ENCODE measurements at regions of chr11 and their contacts with region 1.

Region 1: GRCh38 chr11:86041975-86042378 is 26.9 kb downstream of the PICALM start:
- DNase-seq: peak in 9 of 14 experiments; percentile 11 to 88 (median 34)
- ATAC-seq: peak; percentile 98
- H3K4me3 ChIP-seq: no peak overlapping the region
- H3K4me3 Mint-ChIP-seq: no peak overlapping the region
- H3K27ac ChIP-seq: no peak overlapping the region
- H3K27ac Mint-ChIP-seq: peak overlapping the region; percentile 27
- H3K4me1 ChIP-seq: peaks cover 16% of the 10 kb centered on the region
- H3K4me1 Mint-ChIP-seq: peaks cover 62% of the 10 kb centered on the region
- H3K27me3 ChIP-seq: no peaks in the 10 kb centered on the region
- H3K27me3 Mint-ChIP-seq: no peaks in the 10 kb centered on the region
- CTCF ChIP-seq: peak; percentile 93

Region 2: DNA sequence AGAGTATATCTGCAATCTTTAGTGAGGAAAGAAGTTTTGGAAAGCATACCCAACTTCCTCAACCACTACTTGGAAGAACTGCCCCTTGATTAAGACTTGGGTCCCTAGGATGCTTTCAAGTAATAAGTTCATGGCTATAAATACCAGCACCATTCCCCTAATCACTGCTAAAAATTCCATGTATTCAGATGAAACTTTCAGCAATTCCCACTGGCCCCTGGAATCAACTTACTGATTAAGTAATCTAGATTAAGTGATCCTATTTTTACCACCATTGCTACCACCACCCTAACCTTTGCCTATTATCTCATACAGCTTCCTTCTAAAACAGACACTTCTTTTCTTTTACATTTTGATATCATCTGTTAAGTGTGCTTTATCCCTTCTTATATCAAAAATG is 16.4 kb after region 1 on chr11:
- CTCF ChIA-PET with region 1: interaction called, 8 read pairs
- POLR2A ChIA-PET with region 1: interaction called, 5 read pairs
- intact Hi-C with region 1: loop called (anchors 2 kb)
- DNase-seq: no peak
- ATAC-seq: no peak
- H3K4me3 ChIP-seq: no peak overlapping the region
- H3K4me3 Mint-ChIP-seq: peak overlapping the region; percentile 12
- H3K27ac ChIP-seq: no peak overlapping the region
- H3K27ac Mint-ChIP-seq: no peak overlapping the region
- H3K4me1 ChIP-seq: peaks cover 41% of the 10 kb centered on the region
- H3K4me1 Mint-ChIP-seq: peaks cover 87% of the 10 kb centered on the region
- H3K27me3 ChIP-seq: no peaks in the 10 kb centered on the region
- H3K27me3 Mint-ChIP-seq: no peaks in the 10 kb centered on the region
- CTCF ChIP-seq: no peak

Region 3: DNA sequence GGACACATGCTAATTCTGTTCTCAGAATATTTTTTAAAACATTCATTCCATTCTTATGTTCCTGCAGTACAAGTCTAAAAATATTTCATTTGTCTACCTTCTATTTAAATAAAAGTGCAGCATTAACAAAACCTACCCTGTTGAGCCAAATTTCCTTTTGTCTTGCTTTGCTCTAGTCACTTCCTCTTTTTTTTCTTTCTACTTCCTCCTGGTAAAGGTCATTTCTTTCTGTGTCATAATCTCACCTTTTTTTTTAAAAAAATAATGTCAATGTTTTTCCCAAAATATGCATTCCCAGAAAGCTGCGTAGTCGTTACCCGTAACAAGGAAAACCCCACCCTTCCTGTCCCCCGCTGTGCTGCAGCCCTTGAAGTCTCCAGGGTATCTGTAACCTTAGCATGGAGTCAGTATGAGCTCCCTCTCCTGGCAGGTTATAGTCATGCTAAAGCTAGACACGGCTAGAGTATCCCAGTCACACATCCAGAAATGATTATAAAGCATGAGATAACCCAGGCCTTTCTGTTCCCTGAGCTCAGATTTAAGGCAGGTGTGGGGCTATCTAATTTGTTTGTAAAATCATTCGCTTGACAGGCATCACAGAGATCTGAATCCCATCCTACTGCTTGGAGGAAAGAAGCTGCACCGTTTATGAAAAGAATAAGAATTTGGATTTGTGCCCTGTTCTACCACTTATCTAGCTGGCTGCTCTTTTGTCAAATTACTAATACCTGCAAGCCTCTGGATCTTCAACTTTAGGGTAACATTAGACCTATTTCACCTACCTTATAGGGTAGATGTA is 151.5 kb after region 1 on chr11:
- CTCF ChIA-PET with region 1: interaction called, 57 read pairs
- POLR2A ChIA-PET with region 1: interaction called, 34 read pairs
- intact Hi-C with region 1: loop called (anchors 1 kb)
- DNase-seq: peak; percentile 18 to 84 (median 42)
- ATAC-seq: peak; percentile 100
- H3K4me3 ChIP-seq: peak overlapping the region; percentile 37
- H3K4me3 Mint-ChIP-seq: peak overlapping the region; percentile 94
- H3K27ac ChIP-seq: no peak overlapping the region
- H3K27ac Mint-ChIP-seq: peak overlapping the region; percentile 69
- H3K4me1 ChIP-seq: peaks cover 4% of the 10 kb centered on the region
- H3K4me1 Mint-ChIP-seq: peaks cover 15% of the 10 kb centered on the region
- H3K27me3 ChIP-seq: no peaks in the 10 kb centered on the region
- H3K27me3 Mint-ChIP-seq: no peaks in the 10 kb centered on the region
- CTCF ChIP-seq: peak; percentile 74

Region 4: GRCh38 chr11:86218125-86219084 is 176.4 kb after region 1 on chr11:
- CTCF ChIA-PET with region 1: interaction called, 13 read pairs
- POLR2A ChIA-PET with region 1: no interaction called
- intact Hi-C with region 1: loop called in 1 of 2 experiments (anchors 1 kb)
- DNase-seq: peak; percentile 26 to 82 (median 43)
- ATAC-seq: peak; percentile 95
- H3K4me3 ChIP-seq: peak overlapping the region; percentile 21
- H3K4me3 Mint-ChIP-seq: peak overlapping the region; percentile 66
- H3K27ac ChIP-seq: no peak overlapping the region
- H3K27ac Mint-ChIP-seq: no peak overlapping the region
- H3K4me1 ChIP-seq: peaks cover 8% of the 10 kb centered on the region
- H3K4me1 Mint-ChIP-seq: peaks cover 11% of the 10 kb centered on the region
- H3K27me3 ChIP-seq: no peaks in the 10 kb centered on the region
- H3K27me3 Mint-ChIP-seq: peaks cover 31% of the 10 kb centered on the region
- CTCF ChIP-seq: peak; percentile 87

Region 5: DNA sequence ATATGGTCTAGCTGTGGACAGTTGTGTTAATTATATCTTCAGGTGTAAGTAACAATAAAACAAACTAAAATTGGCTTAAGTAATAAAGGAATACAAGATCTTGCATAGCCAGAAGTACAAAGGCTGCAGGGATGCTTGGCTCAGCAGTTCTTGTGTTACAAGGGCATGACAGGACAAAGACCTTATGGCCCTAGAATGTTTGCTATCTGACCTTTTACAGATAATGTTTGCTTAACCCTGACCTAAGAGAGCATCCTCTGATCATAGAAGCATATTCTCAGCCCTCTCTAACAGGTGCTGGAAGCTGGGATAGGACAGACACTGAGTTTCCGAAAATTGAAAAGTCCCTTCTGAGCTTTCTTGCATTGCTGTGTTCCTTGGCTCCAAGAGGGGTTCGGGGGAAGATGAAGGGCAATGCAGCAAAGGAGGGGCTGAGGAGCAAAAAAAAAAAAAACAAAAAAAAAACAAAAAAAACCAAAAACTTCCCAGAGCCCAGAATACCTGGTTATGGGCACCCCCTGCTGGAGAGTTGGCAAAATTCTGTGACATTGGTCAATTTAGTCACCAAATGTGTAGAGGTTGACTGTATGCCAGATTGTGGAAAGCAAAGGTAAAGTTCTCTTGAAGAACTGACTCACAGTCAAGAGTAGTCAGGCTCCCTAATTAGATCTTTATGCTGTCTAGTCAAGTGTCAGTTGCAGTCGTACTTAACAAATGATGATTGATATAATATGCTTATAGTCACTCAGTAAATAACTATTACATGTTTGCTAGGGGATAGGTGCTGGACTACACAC is 249.7 kb after region 1 on chr11:
- CTCF ChIA-PET with region 1: interaction called, 8 read pairs
- POLR2A ChIA-PET with region 1: interaction called, 3 read pairs
- intact Hi-C with region 1: loop called (anchors 2 to 5 kb)
- DNase-seq: peak; percentile 41 to 80 (median 54)
- ATAC-seq: peak; percentile 64
- H3K4me3 ChIP-seq: no peak overlapping the region
- H3K4me3 Mint-ChIP-seq: no peak overlapping the region
- H3K27ac ChIP-seq: no peak overlapping the region
- H3K27ac Mint-ChIP-seq: no peak overlapping the region
- H3K4me1 ChIP-seq: peaks cover 32% of the 10 kb centered on the region
- H3K4me1 Mint-ChIP-seq: peaks cover 29% of the 10 kb centered on the region
- H3K27me3 ChIP-seq: no peaks in the 10 kb centered on the region
- H3K27me3 Mint-ChIP-seq: no peaks in the 10 kb centered on the region
- CTCF ChIP-seq: peak; percentile 62